ENCODE measurements at regions of chr7 and their contacts with region 1.

Region 1: DNA sequence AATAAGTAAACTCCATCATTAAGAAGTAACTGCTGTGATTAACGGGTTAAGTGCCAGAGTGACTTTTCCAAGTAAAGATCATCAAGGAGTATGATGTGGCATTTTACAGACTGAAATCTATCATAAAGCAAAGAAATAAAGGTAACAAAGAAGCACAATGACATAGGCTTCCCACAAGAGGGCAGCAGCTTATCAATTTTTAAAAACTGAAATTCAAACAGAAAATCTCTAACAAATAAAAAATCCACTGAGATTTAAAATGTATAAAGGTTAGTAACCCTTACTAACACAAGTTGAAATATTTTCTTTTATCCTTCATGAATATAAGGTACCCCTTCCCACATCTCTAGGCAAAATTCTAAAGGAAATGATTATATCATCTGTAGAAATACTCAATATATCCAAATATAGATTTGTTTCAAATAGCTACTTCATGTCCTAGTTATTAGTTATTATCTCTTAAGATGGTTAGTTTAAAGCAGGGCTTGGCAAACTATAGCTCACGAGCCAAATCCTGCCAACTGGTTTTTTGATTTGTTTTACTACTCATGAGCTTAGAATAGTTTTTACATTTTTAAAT is 29.2 kb downstream of the FAM3C start:
- DNase-seq: no peak
- ATAC-seq: no peak

Region 2: GRCh38 chr7:121061677-121062582 is 305.0 kb before region 1 on chr7:
- intact Hi-C with region 1: no loop called
- DNase-seq: no peak
- ATAC-seq: peak; percentile 31

Region 3: DNA sequence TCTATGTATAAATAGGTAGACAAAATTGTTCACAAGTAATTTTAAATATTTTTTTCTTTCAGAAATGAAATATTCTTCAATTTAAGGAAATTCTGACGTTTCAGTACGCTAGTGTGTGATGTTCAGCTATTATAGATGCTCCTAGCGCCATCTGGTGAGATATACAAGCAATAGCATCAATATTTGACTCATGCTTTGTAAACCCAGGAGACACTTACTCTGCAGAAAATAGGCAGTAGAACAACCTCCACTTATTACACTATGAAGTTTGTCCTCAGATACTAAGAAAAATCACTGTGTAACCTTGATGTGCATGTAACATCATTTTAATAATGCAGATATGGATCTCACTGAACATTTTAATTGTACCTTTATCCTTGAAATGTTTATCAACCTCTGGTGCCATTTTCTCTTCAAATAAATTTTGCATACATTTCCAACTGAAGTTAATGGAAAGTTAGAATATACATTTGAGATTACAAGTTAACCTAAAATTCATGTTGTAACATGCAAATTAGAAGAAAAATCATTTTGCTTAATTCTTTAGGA is 180.7 kb after region 1 on chr7:
- intact Hi-C with region 1: loop called (anchors 2 kb)
- DNase-seq: no peak
- ATAC-seq: peak; percentile 84